PC-3 (cell line): ENCODE measurements at regions of chr6 and their contacts with region 1.

Region 1: GRCh38 chr6:144149891-144150709 is at the start of gene STX11:
- DNase-seq: peak; percentile 58
- ATAC-seq: peak; percentile 88
- H3K4me3 ChIP-seq: peak within 1 kb of the TSS; percentile 73
- H3K27ac ChIP-seq: no peak within 1 kb of the TSS
- H3K4me1 ChIP-seq: peaks cover 9% of the 10 kb centered on the region; the same call in 1 of the 2 replicates
- H3K27me3 ChIP-seq: no peaks in the 10 kb centered on the region
- CTCF ChIP-seq: no peak
- total RNA-seq, gene STX11: 1.2 and 1.5 TPM in 2 replicates

Region 2: GRCh38 chr6:144190593-144190992 is 40.5 kb after region 1 on chr6:
- CTCF ChIA-PET with region 1: no interaction called
- POLR2A ChIA-PET with region 1: no interaction called
- intact Hi-C with region 1: loop called (anchors 2 kb)
- DNase-seq: peak; percentile 77
- ATAC-seq: peak; percentile 99
- H3K4me3 ChIP-seq: no peak overlapping the region
- H3K27ac ChIP-seq: no peak overlapping the region
- H3K4me1 ChIP-seq: peaks cover 16% of the 10 kb centered on the region
- H3K27me3 ChIP-seq: no peaks in the 10 kb centered on the region
- CTCF ChIP-seq: no peak; the same call in 1 of the 2 replicates

Region 3: DNA sequence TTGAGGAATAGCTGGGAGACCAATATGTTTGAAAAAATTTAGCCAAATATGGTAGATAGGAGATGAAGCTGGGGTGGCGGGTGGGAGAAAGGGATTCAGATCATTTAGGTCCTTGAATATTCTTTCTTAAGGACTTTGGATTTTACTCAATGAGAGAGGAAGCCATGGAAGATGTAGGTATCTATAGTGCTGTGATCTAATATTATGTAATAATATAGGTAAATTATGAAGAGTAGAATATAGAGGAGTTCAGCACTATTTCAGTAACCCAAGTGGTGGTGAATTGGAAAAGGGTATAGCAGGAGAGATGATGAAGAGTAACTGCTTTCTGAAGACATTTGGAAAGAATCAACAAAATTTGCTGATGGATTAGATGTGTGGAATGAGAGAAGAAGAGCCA is 552.7 kb after region 1 on chr6:
- CTCF ChIA-PET with region 1: no interaction called
- POLR2A ChIA-PET with region 1: no interaction called
- intact Hi-C with region 1: no loop called
- DNase-seq: no peak
- ATAC-seq: no peak
- H3K4me3 ChIP-seq: no peak overlapping the region
- H3K27ac ChIP-seq: no peak overlapping the region
- H3K4me1 ChIP-seq: no peaks in the 10 kb centered on the region
- H3K27me3 ChIP-seq: no peaks in the 10 kb centered on the region
- CTCF ChIP-seq: no peak